ENCODE measurements at regions of chr7 and their contacts with region 1.

Region 1: DNA sequence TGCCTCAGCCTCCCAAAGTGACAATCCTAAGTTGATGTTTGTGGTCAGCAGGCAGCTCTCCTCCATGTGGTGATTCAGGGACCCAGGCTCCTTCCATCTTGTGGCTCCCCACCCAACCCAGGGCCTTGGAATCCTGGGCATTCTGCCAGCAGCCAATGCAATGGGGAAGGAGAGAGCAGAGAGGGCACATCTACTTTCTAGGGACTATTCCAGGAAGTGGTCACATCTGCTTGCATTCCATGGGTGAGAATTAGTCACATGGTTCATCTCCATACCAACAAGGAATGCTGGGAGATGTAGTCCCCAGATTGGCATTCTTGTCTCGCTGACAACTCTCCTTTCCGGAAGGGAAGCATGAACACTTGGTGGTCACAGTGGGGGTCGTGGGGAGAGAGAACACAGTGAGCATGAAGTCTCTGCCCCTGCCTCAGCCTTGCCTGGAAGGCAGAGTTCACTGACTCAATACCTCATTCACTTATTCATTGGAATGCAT is 9.9 kb upstream of the SRRM3 start:
- DNase-seq: no peak
- H3K4me3 ChIP-seq: no peak overlapping the region
- H3K27ac ChIP-seq: no peak overlapping the region
- H3K4me1 ChIP-seq: no peaks in the 10 kb centered on the region
- H3K27me3 ChIP-seq: peaks cover 28% of the 10 kb centered on the region
- CTCF ChIP-seq: no peak

Region 2: DNA sequence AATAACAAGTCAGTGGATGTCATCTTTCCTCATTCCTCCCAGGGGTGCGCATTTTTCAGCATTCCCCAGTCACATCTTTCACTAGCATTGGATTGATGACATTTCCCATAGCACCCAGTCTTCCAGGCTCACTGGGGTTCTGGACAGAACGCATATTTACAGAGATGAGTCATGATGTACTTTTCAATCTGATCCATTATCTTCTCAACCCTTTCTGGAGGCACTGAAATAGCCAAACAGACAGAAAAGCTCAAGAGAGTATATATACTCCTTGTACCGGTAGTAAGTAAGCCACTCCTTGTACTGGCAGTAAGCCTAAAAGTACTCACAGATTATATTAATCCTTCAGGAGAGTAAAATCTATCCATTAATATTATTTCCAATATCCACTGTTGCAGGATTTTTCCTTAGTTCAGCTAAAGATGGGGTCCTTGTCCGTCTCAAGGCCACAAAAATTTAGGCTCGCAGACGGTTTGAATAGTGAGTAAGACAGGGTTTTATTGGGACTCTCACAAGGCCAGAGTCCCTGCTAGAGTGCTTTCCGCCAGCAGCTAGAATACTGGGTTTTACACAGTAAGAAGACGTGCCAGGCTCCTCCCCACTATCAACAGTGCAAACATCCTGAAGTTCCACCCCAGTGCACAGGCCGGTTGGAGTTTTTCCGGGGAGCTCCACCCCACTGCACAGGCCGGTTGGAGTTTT is 83.1 kb before region 1 on chr7:
- intact Hi-C with region 1: no loop called
- DNase-seq: no peak
- H3K4me3 ChIP-seq: no peak overlapping the region
- H3K27ac ChIP-seq: peak overlapping the region; percentile 30
- H3K4me1 ChIP-seq: no peaks in the 10 kb centered on the region
- H3K27me3 ChIP-seq: no peaks in the 10 kb centered on the region
- CTCF ChIP-seq: no peak

Region 3: DNA sequence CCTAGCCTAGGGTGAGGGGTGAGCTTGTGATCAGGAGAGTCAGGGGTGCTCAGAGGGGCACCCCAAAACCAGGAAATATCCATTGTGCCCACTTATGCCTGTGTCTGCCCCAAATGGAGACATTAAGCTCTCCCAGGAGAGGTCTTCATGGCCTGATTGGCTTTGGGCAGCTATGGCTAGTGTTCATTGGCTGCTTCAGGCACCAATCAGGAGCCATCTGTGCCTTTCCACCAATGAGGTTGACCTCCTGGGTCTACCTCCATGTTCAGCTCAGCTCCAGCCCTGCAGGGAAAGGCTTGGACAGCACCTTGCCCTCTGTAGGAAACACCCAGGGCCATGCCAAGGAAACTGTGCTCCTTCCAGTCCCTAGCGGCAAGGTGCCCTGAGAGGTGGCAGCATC is 86.7 kb after region 1 on chr7:
- intact Hi-C with region 1: loop called (anchors 10 kb)
- DNase-seq: no peak
- H3K4me3 ChIP-seq: no peak overlapping the region
- H3K27ac ChIP-seq: no peak overlapping the region
- H3K4me1 ChIP-seq: peaks cover 12% of the 10 kb centered on the region
- H3K27me3 ChIP-seq: peaks cover 82% of the 10 kb centered on the region
- CTCF ChIP-seq: no peak

Region 4: DNA sequence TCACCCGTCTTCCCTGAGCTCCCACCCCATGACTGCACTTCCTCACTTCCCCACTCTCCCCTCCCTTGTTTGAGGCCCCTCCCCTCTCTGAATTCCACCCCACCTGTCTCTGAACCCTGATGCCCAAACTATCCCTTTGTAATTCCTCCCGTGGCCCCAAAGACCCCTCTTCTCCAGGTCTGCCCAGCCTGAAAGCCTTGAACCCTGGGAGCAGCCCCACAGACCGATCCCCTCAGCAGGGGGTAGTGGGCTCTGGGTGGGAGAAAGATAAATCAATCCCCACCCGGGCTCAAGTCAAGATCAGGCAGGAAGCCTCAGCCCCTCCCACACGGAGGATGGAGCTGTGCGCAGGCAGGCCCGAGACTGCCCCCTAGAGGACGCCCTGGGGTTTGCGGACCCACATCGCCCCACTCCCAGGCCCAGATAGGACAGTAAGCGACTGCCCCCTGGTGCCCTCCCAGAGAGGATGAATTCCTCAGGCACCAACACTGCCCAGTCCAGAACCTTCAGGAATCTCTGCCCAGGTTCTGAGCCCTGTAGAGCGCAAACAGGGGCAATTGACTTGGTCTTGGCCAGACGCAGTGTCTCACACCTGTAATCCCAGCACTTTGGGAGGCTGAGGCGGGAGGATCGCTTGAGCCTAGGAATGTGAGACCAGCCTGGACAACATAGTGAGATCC is 122.4 kb after region 1 on chr7:
- intact Hi-C with region 1: no loop called
- DNase-seq: peak; percentile 97
- H3K4me3 ChIP-seq: no peak overlapping the region
- H3K27ac ChIP-seq: no peak overlapping the region
- H3K4me1 ChIP-seq: peaks cover 32% of the 10 kb centered on the region
- H3K27me3 ChIP-seq: no peaks in the 10 kb centered on the region
- CTCF ChIP-seq: peak; percentile 100

Measured in left ventricle myocardium inferior (tissue), 1 donor.